Posterior cingulate gyrus (tissue), 11 donors: ENCODE measurements at regions of chr13 and their contacts with region 1.

Region 1: DNA sequence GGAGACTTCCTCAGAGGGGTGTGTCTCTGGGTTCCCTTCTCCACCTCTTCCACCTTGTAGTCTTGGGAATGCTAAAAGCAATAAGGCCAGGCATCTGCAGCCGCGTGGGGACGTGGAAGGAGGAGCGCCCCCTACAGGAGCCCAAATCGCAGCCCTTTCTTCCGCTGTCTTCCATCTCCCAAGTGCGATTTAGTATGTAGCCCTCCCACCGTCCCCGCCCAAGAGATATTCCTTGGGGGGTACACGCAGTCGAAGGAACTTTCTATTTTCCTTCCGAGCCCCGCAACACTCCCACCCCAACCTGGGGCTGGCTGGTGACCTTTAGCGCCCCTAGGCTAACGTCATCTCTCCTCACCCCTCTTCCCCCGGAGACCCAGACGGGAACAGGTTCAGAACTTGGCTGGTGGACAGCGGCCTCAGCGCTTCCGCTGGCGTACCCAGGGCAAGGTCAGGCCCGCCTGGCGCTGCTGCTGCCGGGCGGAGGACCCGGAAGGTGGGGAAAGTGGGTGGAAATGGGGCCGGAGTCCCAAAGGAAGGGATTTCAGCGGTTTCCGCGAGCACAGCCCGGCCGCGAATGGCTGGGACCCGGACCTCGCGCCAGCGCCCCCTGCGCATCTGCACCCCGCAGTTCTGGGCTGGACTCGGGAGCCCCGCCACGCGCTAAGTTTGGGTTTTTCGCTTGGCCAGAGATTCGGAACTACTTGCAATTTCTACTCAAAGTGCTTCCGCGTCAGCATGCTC is 2.1 kb upstream of the PCDH8 start:
- DNase-seq: peak; percentile 37 to 94 (median 62)

Region 2: DNA sequence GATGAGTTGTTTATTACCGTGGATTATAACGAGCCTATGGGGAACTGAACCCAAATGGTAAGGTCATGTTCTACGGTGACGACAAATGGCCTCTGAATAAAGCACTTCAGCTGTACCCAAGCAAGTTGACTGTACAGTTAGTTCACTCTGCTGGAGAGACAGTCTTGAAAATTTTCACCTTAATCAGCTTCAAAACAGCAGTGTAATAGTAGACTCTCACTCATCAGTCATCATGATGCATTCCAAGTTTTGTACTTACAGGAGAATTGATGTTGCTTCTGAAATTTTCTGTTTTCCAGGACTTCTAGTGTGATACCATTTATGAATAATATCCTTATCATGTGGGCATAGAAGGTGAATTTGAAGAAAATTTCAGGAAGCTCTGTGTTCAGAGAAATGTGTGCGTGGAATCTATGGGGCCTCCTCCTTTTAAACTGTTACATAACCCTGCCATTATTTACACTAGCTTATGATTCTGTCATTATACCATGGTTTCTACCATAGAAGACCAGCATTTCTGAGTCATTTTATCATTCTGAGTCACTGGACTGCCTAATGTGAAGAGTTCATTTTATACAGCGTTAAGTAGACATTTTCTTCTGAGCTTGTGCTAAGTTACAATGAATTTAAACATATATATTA is 1169.4 kb before region 1 on chr13:
- intact Hi-C with region 1: no loop called
- DNase-seq: no peak

Region 3: DNA sequence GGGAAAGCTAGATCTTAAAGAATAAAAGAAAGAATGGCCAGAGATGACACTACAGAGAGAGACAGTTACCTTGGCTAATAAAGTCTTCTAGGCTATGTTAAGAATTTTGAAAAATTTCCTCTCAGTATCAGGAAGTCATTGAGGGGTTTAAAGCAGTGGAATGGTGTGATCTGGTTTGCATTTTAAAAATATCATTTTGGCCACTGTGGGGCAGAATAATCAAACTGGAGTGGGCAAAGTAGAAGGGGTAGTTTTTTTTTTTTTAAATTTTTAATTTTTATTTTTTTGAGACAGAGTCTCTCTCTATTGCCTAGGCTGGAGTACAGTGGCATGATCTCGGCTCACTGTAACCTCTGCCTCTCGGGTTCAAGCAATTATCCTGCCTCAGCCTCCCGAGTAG is 106.6 kb before region 1 on chr13:
- intact Hi-C with region 1: loop called (anchors 5 kb)
- DNase-seq: no peak

Region 4: DNA sequence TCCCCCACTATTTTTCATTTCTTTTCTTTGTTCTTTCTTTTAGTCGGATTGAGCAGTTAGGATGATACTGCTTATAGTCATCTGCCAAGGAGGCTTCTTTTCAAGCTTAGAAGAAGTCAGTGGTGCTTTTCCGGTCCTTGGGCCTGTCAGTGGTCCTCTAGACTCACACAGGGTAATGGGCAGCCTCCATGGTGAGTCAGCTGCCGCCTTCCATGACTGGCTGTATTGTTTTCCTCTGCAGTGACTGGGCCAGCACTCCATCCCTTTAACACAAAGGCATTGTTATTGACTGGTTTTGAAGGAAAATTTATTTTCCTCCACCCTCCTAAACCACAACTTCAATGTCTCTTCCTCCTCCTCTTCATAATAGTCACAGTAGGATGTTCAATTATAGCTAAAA is 63.8 kb before region 1 on chr13:
- intact Hi-C with region 1: no loop called
- DNase-seq: peak in 9 of 10 donors; percentile 35 to 94 (median 56)

Region 5: GRCh38 chr13:52968074-52968700 is 117.6 kb after region 1 on chr13:
- intact Hi-C with region 1: loop called (anchors 5 kb)
- DNase-seq: peak; percentile 33 to 95 (median 74)

Region 6: GRCh38 chr13:53151336-53152056 is 300.9 kb after region 1 on chr13:
- intact Hi-C with region 1: loop called (anchors 5 kb)
- DNase-seq: peak in 4 of 10 donors; percentile 16 to 54 (median 48)